Mammary epithelial cell (primary cell): ENCODE measurements at regions of chr19 and their contacts with region 1.

Region 1: DNA sequence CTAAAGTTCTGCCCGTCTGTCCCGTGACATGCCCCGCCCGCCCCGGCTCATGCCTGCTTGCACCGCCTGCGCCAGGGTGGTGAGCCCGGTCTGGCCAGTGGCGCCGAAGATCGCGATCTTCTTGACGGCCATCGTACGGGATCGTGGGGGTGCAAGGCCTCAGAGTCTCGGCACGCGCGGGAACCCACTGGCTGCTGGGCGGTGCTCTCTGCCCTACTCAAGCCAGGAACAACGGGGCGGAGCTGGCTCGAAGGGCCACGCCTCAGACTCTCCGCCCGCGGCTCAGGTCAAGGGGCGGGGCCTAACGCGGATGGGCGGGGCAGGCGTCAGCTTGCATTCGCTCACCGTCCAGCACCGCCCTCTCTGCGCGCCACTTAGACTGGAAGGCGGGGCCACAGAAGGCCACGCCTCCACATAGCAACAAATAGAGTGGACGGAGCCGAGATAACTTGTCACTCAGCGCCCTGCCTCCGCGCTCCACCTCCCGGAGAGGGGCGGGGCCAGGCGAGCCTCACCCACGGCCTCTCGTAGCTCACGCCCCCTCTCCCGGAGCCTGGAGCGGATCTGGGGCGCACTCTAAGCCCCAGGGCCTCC is at the start of gene BLVRB:
- DNase-seq: peak; percentile 99
- H3K4me3 ChIP-seq: peak within 1 kb of the TSS; percentile 74 to 83 (median 80)
- H3K27ac ChIP-seq: peak within 1 kb of the TSS; percentile 75
- H3K4me1 ChIP-seq: peaks cover 26% of the 10 kb centered on the region
- H3K27me3 ChIP-seq: no peaks in the 10 kb centered on the region
- CTCF ChIP-seq: no peak
- total RNA-seq, gene BLVRB: 57.6 to 92.5 TPM

Region 2: GRCh38 chr19:40425450-40426287 is 40.0 kb before region 1 on chr19 and contains the start of gene SERTAD1:
- CTCF ChIA-PET with region 1: interaction called, 6 read pairs
- dilution Hi-C with region 1: no loop called
- in situ Hi-C with region 1: no loop called
- intact Hi-C with region 1: loop called (anchors 1 kb)
- DNase-seq: peak; percentile 99
- H3K4me3 ChIP-seq: peak within 1 kb of the TSS; percentile 77 to 92 (median 83)
- H3K27ac ChIP-seq: peak within 1 kb of the TSS; percentile 89
- H3K4me1 ChIP-seq: peaks cover 34% of the 10 kb centered on the region
- H3K27me3 ChIP-seq: no peaks in the 10 kb centered on the region
- CTCF ChIP-seq: peak; percentile 21 to 73
- total RNA-seq, gene SERTAD1: 20.6 to 25.8 TPM

Region 3: GRCh38 chr19:40489882-40490230 is 24.2 kb after region 1 on chr19:
- CTCF ChIA-PET with region 1: no interaction called
- dilution Hi-C with region 1: no loop called
- in situ Hi-C with region 1: no loop called
- intact Hi-C with region 1: no loop called
- DNase-seq: no peak
- H3K4me3 ChIP-seq: no peak overlapping the region
- H3K27ac ChIP-seq: no peak overlapping the region
- H3K4me1 ChIP-seq: no peaks in the 10 kb centered on the region
- H3K27me3 ChIP-seq: peaks cover 6% of the 10 kb centered on the region
- CTCF ChIP-seq: no peak

Region 4: DNA sequence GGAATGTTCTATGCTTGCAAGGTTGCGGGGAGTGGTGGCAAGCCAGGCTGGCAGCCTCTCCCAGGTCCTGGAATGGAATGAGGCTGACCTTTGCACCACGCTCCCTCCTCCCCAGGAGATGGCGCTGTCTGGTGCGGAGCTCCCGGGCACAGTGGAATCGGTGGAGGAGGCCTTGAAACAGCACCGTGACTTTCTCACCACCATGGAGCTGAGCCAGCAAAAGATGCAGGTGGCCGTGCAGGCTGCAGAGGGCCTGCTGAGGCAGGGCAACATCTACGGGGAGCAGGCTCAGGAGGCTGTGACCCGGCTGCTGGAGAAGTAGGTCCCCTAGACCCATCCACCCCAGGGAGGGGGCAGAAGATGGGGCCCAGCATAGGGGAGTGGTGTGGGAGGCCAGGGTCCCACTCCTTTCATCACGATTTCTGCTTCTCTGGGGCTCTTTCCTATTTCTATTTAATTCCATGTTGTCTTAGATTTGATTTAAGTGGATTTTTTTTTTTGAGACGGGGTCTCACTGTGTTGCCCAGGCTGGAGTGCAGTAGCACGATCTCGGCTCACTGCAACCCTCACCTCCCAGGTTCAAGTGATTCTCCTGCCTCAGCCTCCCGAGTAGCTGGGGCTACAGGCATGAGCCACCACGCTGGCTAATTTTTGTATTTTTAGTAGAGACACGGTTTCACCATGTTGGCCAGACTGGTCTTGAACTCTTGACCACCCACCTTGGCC is 57.8 kb after region 1 on chr19:
- CTCF ChIA-PET with region 1: interaction called, 5 read pairs
- dilution Hi-C with region 1: no loop called
- in situ Hi-C with region 1: no loop called
- intact Hi-C with region 1: loop called (anchors 5 kb)
- DNase-seq: peak; percentile 42
- H3K4me3 ChIP-seq: no peak overlapping the region
- H3K27ac ChIP-seq: no peak overlapping the region
- H3K4me1 ChIP-seq: no peaks in the 10 kb centered on the region
- H3K27me3 ChIP-seq: no peaks in the 10 kb centered on the region
- CTCF ChIP-seq: peak; percentile 55 to 57

Region 5: DNA sequence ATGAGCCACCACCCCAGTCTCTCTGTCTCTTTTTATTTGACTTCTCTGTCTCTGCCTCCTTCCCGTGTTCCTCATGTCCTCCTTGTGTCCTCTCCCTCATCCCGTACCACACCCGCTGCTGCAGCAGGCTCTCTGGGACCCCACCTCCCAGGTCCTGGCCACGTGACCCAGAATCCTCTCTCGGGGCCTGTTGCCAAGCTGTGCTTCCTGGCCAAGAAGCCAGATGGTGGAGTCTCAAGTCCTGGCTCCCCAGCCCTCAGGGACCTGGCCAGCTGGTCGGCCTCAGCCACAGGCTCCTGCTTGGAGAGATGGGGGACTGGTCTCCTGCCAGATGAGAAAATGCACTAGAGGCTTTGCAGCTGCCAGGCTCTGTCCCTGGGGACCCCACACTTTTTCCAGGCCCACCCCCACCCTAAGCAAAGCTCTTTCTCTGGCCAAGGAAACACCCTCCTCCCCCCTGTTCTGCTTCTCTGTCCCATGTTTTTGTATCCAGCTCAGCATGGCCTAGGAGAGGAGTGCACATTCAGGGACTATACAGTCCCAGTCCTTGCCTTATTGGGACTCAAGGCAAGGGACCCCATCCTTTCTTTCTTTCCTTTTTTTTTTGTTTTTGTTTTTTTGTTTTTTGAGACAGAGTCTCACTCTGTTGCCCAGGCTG is 76.7 kb after region 1 on chr19:
- CTCF ChIA-PET with region 1: no interaction called
- dilution Hi-C with region 1: no loop called
- in situ Hi-C with region 1: no loop called
- intact Hi-C with region 1: no loop called
- DNase-seq: no peak
- H3K4me3 ChIP-seq: no peak overlapping the region
- H3K27ac ChIP-seq: no peak overlapping the region
- H3K4me1 ChIP-seq: no peaks in the 10 kb centered on the region
- H3K27me3 ChIP-seq: no peaks in the 10 kb centered on the region
- CTCF ChIP-seq: no peak

Region 6: DNA sequence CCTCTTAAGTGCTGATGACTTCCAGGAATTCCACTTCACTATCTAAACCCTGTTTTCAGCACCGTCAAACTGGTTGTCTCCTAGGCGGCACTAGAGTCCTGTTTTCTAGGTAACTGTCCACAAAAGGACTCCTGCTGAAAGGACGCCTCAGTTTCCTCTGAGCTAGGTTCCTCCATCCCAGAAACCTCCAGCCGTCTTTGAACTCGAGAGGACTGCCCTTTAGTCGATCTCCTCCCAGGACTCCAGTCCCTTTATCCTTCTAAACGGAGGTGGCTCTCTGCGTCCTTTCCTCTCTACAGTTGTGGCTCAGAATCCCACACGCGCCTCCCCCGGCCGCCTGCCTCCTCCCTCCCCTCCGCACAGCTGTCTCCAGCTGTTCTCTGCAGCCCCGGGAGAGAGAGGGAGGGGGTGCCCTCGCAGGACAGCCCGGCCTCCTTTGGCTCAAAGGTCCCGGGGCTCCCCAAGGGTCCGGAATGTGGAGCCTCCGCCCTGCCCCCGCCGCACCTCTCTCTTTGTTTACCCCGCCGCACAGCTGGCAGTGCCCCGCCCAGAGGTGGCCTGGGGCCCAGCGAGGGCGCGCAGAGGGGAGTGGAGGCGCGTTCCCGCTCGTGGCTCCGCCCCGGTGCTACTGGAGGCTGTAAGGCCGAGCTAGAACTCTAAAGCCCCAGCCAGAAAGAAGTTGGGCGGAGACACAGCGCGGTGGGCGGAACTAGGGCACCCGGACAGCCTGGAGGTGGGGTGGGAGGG is 137.9 kb after region 1 on chr19:
- CTCF ChIA-PET with region 1: interaction called, 8 read pairs
- dilution Hi-C with region 1: no loop called
- in situ Hi-C with region 1: no loop called
- intact Hi-C with region 1: loop called (anchors 1 kb)
- DNase-seq: peak; percentile 97
- H3K4me3 ChIP-seq: peak overlapping the region; percentile 32 to 50 (median 37)
- H3K27ac ChIP-seq: peak overlapping the region; percentile 39
- H3K4me1 ChIP-seq: peaks cover 50% of the 10 kb centered on the region
- H3K27me3 ChIP-seq: no peaks in the 10 kb centered on the region
- CTCF ChIP-seq: peak in 1 of 2 donors; percentile 32

Region 7: DNA sequence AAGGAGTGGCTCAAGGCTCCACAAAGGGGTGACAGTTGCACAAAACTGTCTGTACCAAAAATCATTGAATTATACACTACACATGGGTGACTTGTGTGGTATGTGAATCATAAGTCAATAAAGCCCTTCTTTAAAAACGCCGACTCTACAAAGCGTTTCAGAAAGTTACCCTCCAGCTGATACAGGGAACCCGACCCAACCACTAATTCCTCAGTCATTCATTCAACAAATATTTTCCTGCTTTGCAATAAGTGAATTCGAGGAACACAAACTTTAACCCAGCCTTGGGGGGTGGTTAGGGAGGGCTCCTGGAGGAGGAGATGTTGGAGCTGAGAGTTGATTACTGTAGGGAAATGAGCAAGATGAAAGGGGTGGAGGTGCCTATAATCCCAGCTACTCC is 167.6 kb after region 1 on chr19:
- CTCF ChIA-PET with region 1: interaction called, 3 read pairs
- dilution Hi-C with region 1: no loop called
- in situ Hi-C with region 1: no loop called
- intact Hi-C with region 1: loop called (anchors 1 kb)
- DNase-seq: no peak
- H3K4me3 ChIP-seq: no peak overlapping the region
- H3K27ac ChIP-seq: no peak overlapping the region
- H3K4me1 ChIP-seq: no peaks in the 10 kb centered on the region
- H3K27me3 ChIP-seq: no peaks in the 10 kb centered on the region
- CTCF ChIP-seq: no peak